ENCODE measurements at regions of chr15 and their contacts with region 1.

Region 1: GRCh38 chr15:65818927-65819562 is 27.0 kb upstream of the DENND4A start:
- DNase-seq: peak in 7 of 9 donors; percentile 75 to 95 (median 90)
- ATAC-seq: peak; percentile 95
- H3K4me3 ChIP-seq: peak overlapping the region; percentile 9
- H3K4me3 Mint-ChIP-seq: peak overlapping the region; percentile 21 to 83 (median 76)
- H3K27ac ChIP-seq: peak overlapping the region; percentile 91
- H3K27ac Mint-ChIP-seq: peak overlapping the region; percentile 93 to 100 (median 98)
- H3K4me1 ChIP-seq: peaks cover 23 to 39% of the 10 kb centered on the region in 2 donors
- H3K4me1 Mint-ChIP-seq: peaks cover 33 to 69% (median 52%) of the 10 kb centered on the region in 7 donors
- H3K27me3 ChIP-seq: no peaks in the 10 kb centered on the region
- H3K27me3 Mint-ChIP-seq: no peaks in the 10 kb centered on the region

Region 2: DNA sequence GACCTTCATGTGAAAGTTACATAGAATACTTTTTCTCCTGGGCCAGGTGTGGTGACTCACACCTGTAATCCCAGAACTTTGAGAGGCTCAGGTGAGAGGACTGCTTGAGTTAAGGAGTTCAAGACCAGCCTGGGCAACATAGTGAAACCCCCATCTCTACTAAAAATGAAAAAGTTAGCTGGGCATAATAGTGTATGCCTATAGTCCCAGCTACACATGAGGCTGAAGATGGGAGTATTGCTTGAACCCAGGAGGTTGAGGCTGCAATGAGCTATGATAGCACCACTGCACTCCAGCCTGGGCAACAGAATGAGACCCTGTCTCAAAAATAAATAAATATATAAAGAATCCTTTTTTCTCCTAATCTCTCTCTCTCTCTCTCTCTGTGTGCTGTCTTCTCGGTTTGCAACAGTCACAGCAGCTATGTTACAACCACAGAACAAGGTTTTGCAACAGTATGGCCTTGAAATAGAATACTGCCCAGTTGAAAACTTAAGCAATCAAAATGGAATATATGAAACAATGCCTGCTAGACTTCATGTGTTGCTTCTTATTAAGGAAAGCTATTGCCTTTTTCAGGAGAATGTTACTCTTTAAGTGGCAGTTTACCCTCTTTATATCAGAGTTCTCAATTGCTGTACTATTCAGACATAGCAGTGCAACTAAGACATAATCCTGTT is 14.7 kb before region 1 on chr15:
- CTCF ChIA-PET with region 1: interaction called, 4 read pairs
- POLR2A ChIA-PET with region 1: interaction called, 34 read pairs
- intact Hi-C with region 1: loop called (anchors 1 kb)
- DNase-seq: no peak
- ATAC-seq: peak; percentile 67
- H3K4me3 ChIP-seq: no peak overlapping the region
- H3K4me3 Mint-ChIP-seq: no peak overlapping the region
- H3K27ac ChIP-seq: no peak overlapping the region
- H3K27ac Mint-ChIP-seq: peak overlapping the region in 6 of 9 donors; percentile 1 to 98 (median 80)
- H3K4me1 ChIP-seq: peaks cover 20 to 27% of the 10 kb centered on the region in 2 donors
- H3K4me1 Mint-ChIP-seq: peaks cover 4 to 42% (median 35%) of the 10 kb centered on the region in 7 donors
- H3K27me3 ChIP-seq: no peaks in the 10 kb centered on the region
- H3K27me3 Mint-ChIP-seq: no peaks in the 10 kb centered on the region

Region 3: GRCh38 chr15:65887565-65887964 is 68.5 kb after region 1 on chr15:
- CTCF ChIA-PET with region 1: no interaction called
- POLR2A ChIA-PET with region 1: no interaction called
- intact Hi-C with region 1: loop called (anchors 1 kb)
- DNase-seq: peak in 8 of 9 donors; percentile 41 to 89 (median 82)
- ATAC-seq: peak; percentile 93
- H3K4me3 ChIP-seq: no peak overlapping the region
- H3K4me3 Mint-ChIP-seq: peak overlapping the region; percentile 26 to 82 (median 58)
- H3K27ac ChIP-seq: peak overlapping the region; percentile 71
- H3K27ac Mint-ChIP-seq: peak overlapping the region; percentile 84 to 99 (median 96)
- H3K4me1 ChIP-seq: peaks cover 15 to 52% of the 10 kb centered on the region in 2 donors
- H3K4me1 Mint-ChIP-seq: peaks cover 35 to 92% (median 77%) of the 10 kb centered on the region in 7 donors
- H3K27me3 ChIP-seq: no peaks in the 10 kb centered on the region
- H3K27me3 Mint-ChIP-seq: no peaks in the 10 kb centered on the region

Region 4: GRCh38 chr15:66004618-66005262 is 185.7 kb after region 1 on chr15:
- CTCF ChIA-PET with region 1: no interaction called
- POLR2A ChIA-PET with region 1: no interaction called
- intact Hi-C with region 1: no loop called
- DNase-seq: peak in 2 of 9 donors; percentile 21 to 32
- ATAC-seq: no peak
- H3K4me3 ChIP-seq: no peak overlapping the region
- H3K4me3 Mint-ChIP-seq: no peak overlapping the region
- H3K27ac ChIP-seq: no peak overlapping the region
- H3K27ac Mint-ChIP-seq: no peak overlapping the region
- H3K4me1 ChIP-seq: no peaks in the 10 kb centered on the region
- H3K4me1 Mint-ChIP-seq: peaks cover 0 to 1% (median 0%) of the 10 kb centered on the region in 7 donors
- H3K27me3 ChIP-seq: no peaks in the 10 kb centered on the region
- H3K27me3 Mint-ChIP-seq: peaks cover 8 to 44% (median 28%) of the 10 kb centered on the region in 5 donors

Measured in naive thymus-derived CD4-positive, alpha-beta T cell (primary cell).